ENCODE measurements at regions of chr5 and their contacts with region 1.

Region 1: DNA sequence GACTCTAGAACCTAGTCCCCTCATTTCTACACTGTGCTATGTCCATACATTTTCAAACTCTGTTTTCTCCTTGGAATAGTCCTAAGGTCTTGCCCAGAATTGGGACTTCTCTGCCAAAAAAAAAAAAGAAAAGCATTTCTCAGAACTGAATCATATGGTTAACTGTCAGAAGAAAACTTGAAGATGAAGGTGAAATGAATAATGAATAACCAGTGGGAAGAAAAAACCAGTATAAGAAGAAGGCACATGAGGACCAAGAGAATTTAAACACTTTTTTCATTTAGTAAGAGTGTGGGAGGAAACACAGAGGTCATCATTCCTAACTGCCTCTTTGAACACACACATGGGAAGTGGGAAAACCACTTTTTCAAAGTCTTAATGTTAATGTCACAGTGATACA is 197.7 kb downstream of the PRELID2 start:
- DNase-seq: no peak
- H3K4me3 ChIP-seq: no peak overlapping the region
- H3K27ac ChIP-seq: no peak overlapping the region
- H3K4me1 ChIP-seq: no peaks in the 10 kb centered on the region
- H3K27me3 ChIP-seq: no peaks in the 10 kb centered on the region
- CTCF ChIP-seq: no peak
- POLR2A ChIP-seq: no peak

Region 2: DNA sequence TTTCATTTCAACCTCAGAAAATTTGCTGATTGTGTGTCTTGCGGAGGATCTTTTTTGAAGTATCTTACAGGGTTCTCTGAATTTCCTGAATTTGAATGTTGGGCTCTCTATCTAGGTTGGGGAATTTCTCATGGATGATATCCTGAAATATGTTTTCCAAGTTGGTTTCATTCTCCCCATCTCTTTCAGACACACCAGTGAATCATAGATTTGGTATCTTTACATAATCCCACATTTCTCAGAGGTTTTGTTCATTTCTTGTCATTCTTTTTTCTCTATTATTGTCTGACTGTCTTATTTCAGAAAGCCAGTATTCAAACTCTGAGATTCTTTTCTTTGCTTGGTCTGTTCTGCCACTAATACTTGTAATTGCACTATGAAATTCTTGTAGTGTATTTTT is 259.2 kb before region 1 on chr5:
- intact Hi-C with region 1: loop called (anchors 10 kb)
- DNase-seq: no peak
- H3K4me3 ChIP-seq: no peak overlapping the region
- H3K27ac ChIP-seq: no peak overlapping the region
- H3K4me1 ChIP-seq: no peaks in the 10 kb centered on the region
- H3K27me3 ChIP-seq: no peaks in the 10 kb centered on the region
- CTCF ChIP-seq: no peak
- POLR2A ChIP-seq: no peak

Region 3: GRCh38 chr5:145536133-145536532 is 101.3 kb before region 1 on chr5:
- intact Hi-C with region 1: no loop called
- DNase-seq: no peak
- H3K4me3 ChIP-seq: no peak overlapping the region
- H3K27ac ChIP-seq: no peak overlapping the region
- H3K4me1 ChIP-seq: no peaks in the 10 kb centered on the region
- H3K27me3 ChIP-seq: no peaks in the 10 kb centered on the region
- CTCF ChIP-seq: no peak
- POLR2A ChIP-seq: no peak

Region 4: DNA sequence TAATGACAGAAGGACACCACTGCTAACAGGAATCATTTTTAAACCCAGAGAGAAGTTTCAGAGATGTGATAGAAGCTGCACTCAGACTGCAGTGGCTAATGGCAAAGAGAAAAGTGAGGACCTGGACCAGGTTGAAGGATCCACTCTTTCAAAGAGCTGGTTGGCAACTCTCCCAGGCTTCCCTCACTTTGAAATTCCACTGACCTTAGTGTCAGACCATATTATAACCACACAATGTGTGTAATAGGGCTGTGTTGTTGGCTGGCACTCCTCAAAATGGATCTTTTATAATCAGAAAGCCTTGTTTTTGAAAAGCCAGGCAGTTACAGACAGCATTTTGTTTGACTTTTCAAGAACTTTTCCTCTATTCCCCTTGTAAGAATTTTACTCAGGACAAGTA is 83.0 kb before region 1 on chr5:
- intact Hi-C with region 1: no loop called
- DNase-seq: no peak
- H3K4me3 ChIP-seq: no peak overlapping the region
- H3K27ac ChIP-seq: no peak overlapping the region
- H3K4me1 ChIP-seq: no peaks in the 10 kb centered on the region
- H3K27me3 ChIP-seq: no peaks in the 10 kb centered on the region
- CTCF ChIP-seq: no peak
- POLR2A ChIP-seq: no peak

Region 5: DNA sequence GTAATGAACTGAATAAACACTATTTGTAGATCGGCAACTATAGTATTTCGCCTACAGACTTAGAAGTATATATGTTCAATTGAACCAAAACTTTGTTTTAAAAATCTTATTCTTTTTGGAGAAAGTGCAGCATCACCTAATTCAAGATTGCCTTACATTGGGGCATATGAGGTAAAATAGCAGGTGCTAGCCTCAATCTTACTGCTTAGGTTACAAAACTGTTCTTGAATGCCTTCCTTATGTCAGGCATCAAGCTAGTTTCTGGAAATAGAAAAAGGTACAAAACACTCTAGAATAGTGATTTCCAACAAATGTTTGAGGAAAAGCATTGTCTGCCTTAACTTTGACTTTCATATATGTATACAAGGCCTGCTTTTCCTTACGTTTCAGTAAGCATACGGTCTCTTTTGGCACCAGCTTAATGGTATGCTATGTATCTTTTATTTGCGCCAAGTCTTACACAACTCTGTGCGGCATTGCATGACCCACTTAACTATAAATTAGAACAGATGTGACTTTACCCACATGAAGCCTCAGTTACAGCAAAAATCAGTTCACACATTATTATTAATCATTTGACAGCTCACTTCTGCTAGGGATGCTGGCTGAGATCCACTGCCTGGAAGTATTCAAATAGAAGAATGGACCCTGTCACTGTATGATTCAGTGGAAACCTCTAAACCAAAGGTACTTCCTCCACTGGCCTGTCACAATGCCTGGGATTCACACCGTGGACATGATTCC is 23.7 kb after region 1 on chr5:
- intact Hi-C with region 1: no loop called
- DNase-seq: no peak
- H3K4me3 ChIP-seq: no peak overlapping the region
- H3K27ac ChIP-seq: no peak overlapping the region
- H3K4me1 ChIP-seq: no peaks in the 10 kb centered on the region
- H3K27me3 ChIP-seq: no peaks in the 10 kb centered on the region
- CTCF ChIP-seq: no peak
- POLR2A ChIP-seq: no peak